ENCODE measurements at regions of chr7 and their contacts with region 1.

Region 1: DNA sequence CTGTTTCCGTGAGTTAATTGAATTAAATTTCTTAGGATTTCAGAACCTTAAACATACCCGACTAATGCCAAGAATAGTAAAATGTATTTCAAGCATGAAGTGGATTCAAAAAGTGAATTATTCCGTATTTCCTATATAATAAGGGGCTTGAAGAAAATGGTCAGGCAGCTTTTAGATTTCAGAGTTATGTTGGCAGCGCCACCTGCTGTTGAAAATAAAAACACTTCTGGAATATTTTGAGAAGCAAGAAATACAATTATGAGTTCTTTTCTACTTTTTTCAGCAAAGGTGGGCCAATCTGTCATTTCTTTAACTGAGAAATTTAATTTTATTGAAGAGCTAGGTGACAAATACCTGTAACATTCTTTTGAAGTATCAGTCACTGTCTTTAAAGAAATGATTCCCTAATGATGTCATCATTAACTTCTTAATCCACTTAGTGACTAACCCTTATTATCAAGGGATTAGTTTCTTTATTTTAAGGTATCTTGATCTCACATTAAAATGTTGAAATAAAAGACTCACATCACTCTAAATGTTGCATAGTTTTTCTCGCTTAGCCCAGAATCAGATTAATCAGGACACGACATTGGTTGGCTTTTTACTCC is 36.6 kb upstream of the AGR3 start:
- DNase-seq: no peak
- ATAC-seq: no peak
- H3K4me3 Mint-ChIP-seq: no peak overlapping the region
- H3K27ac Mint-ChIP-seq: no peak overlapping the region
- H3K4me1 Mint-ChIP-seq: peaks cover 32% of the 10 kb centered on the region
- H3K27me3 Mint-ChIP-seq: no peaks in the 10 kb centered on the region
- CTCF ChIP-seq: no peak

Region 2: DNA sequence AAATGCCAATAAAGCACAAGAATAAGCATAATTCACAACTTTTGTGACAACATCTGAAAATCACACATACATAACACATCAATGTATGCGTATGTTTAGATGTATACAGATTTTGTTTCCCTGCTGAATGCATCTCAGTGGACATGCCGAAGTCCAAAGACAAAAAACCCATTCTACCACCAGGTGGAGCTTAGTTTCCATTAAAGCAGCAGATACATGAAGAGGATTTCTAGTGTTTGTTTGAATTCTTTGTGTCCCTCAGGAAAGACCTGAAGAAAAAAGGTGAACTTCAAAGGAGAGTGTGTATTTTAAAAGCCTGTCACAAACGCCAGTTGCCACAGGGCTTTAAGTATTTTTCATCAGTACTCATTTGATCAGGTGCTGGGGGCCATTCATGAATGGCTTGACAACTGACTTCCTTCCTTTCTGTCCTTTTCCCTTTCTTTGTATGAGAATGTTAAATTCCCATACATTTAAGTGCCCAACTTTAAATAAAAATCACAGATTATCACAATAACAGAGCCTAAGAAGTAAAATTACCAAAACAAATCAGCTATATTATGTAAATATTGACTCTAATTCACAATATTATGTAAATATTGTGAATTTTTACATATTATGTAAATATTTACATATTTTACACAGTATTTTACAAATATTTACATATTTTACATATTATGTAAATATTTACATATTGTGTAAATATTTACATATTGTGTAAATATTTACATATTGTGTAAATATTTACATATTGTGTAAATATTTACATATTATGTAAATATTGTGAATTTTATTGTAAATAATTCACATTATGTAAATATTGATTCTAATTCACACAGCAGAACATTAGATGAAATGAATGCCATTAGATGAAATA is 840.1 kb before region 1 on chr7:
- CTCF ChIA-PET with region 1: interaction called, 4 read pairs
- POLR2A ChIA-PET with region 1: no interaction called
- intact Hi-C with region 1: loop called (anchors 2 kb)
- DNase-seq: no peak
- ATAC-seq: no peak
- H3K4me3 Mint-ChIP-seq: no peak overlapping the region
- H3K27ac Mint-ChIP-seq: no peak overlapping the region
- H3K4me1 Mint-ChIP-seq: no peaks in the 10 kb centered on the region
- H3K27me3 Mint-ChIP-seq: no peaks in the 10 kb centered on the region
- CTCF ChIP-seq: no peak

Region 3: DNA sequence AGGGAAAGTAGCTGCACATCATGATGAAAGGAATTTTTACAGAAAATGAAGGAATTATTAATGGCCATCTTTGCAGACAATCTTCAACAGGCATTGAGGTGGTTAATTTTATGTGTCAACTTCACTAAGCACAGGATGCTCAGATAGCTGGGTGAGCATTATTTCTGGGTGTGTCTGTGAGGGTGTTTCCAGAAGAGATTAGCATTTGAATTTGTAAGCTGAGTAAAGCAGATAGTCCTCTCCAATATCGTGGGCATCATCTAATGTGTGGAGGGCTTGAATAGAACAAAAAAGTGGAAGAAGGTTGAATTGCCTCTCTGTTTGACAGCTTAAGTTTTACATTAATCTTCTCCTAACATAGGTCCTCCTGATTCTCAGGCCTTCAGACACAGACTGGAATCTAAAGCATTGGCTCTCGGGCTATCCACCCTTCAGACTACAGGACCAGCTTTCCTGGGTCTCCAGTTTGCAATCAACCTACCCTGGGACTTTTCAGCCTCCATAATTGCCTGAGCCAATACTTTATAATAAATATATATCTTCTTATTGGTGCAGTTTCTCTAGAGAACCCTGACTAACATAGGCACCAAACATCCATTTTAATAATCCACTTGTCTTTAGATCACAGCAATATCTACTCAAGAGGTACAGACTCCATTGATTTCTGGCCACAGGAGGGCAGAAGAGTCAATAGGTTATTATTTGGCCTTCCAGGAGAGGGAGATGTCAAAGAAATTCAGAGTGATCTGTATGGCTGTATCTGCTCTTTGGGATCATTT is 486.6 kb before region 1 on chr7:
- CTCF ChIA-PET with region 1: interaction called, 7 read pairs
- POLR2A ChIA-PET with region 1: no interaction called
- intact Hi-C with region 1: loop called (anchors 1 kb)
- DNase-seq: no peak
- ATAC-seq: peak; percentile 56
- H3K4me3 Mint-ChIP-seq: no peak overlapping the region
- H3K27ac Mint-ChIP-seq: no peak overlapping the region
- H3K4me1 Mint-ChIP-seq: no peaks in the 10 kb centered on the region
- H3K27me3 Mint-ChIP-seq: peaks cover 4% of the 10 kb centered on the region
- CTCF ChIP-seq: no peak

Region 4: GRCh38 chr7:16604054-16604453 is 314.3 kb before region 1 on chr7:
- CTCF ChIA-PET with region 1: no interaction called
- POLR2A ChIA-PET with region 1: no interaction called
- intact Hi-C with region 1: loop called (anchors 1 kb)
- DNase-seq: no peak
- ATAC-seq: no peak
- H3K4me3 Mint-ChIP-seq: no peak overlapping the region
- H3K27ac Mint-ChIP-seq: no peak overlapping the region
- H3K4me1 Mint-ChIP-seq: peaks cover 3% of the 10 kb centered on the region
- H3K27me3 Mint-ChIP-seq: no peaks in the 10 kb centered on the region
- CTCF ChIP-seq: no peak

Region 5: DNA sequence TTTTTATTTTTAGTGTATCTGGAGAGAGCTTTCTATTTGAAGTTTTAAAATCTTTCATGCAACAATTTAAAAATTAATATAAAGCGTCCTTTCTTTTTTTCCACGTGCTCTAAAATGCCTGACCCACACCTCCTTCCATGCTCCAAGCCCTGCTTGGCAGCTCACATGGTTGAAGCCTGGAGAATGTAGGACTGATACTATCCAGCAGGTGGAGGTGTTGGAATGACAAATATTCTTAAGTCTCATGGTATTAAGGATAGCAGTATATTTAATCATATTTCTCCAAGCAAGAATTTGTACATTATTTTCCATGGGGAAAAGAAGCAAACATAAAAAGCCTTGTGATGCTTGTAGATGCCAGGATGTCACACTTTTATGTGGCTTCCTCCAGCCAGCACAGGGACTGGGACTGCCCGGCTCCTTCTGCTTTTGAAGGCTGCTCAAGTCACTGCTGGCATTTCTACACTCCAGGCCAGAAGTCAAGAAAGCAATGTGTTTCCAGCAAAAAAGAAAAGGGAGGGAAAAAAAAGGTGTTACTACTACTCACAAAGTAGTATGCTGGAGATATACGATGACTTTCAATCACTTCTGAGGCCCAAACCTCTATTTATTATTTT is 222.7 kb before region 1 on chr7:
- CTCF ChIA-PET with region 1: interaction called, 29 read pairs
- POLR2A ChIA-PET with region 1: no interaction called
- intact Hi-C with region 1: loop called (anchors 1 kb)
- DNase-seq: no peak
- ATAC-seq: peak; percentile 49
- H3K4me3 Mint-ChIP-seq: no peak overlapping the region
- H3K27ac Mint-ChIP-seq: no peak overlapping the region
- H3K4me1 Mint-ChIP-seq: no peaks in the 10 kb centered on the region
- H3K27me3 Mint-ChIP-seq: no peaks in the 10 kb centered on the region
- CTCF ChIP-seq: no peak

Region 6: DNA sequence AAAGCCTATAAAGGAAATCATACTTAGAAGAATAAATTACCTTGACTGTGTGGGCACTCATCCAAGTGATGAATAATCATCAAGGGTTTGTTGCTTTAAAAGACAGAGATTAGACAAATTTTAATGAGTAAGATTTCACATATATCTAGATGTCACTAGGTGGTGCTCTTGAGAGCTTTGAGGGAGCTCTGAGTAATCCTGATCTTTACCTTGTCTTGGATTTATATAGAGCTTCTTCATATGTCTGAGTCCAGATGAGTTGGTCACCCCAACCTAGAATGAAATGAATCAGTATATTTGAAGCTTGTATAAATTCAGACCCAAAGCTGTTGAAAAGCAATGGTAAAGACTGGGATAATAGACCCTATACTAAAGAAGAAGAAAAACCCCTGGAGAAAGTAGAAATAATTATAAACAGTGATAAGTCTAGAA is 117.3 kb before region 1 on chr7:
- CTCF ChIA-PET with region 1: interaction called, 54 read pairs
- POLR2A ChIA-PET with region 1: no interaction called
- intact Hi-C with region 1: loop called (anchors 1 kb)
- DNase-seq: no peak
- ATAC-seq: peak; percentile 56
- H3K4me3 Mint-ChIP-seq: no peak overlapping the region
- H3K27ac Mint-ChIP-seq: no peak overlapping the region
- H3K4me1 Mint-ChIP-seq: peaks cover 4% of the 10 kb centered on the region
- H3K27me3 Mint-ChIP-seq: no peaks in the 10 kb centered on the region
- CTCF ChIP-seq: no peak

Region 7: GRCh38 chr7:16891338-16891737 is 27.1 kb before region 1 on chr7:
- CTCF ChIA-PET with region 1: interaction called, 21 read pairs
- POLR2A ChIA-PET with region 1: no interaction called
- intact Hi-C with region 1: loop called (anchors 1 kb)
- DNase-seq: no peak
- ATAC-seq: peak; percentile 45
- H3K4me3 Mint-ChIP-seq: no peak overlapping the region
- H3K27ac Mint-ChIP-seq: no peak overlapping the region
- H3K4me1 Mint-ChIP-seq: peaks cover 4% of the 10 kb centered on the region
- H3K27me3 Mint-ChIP-seq: no peaks in the 10 kb centered on the region
- CTCF ChIP-seq: no peak

Region 8: DNA sequence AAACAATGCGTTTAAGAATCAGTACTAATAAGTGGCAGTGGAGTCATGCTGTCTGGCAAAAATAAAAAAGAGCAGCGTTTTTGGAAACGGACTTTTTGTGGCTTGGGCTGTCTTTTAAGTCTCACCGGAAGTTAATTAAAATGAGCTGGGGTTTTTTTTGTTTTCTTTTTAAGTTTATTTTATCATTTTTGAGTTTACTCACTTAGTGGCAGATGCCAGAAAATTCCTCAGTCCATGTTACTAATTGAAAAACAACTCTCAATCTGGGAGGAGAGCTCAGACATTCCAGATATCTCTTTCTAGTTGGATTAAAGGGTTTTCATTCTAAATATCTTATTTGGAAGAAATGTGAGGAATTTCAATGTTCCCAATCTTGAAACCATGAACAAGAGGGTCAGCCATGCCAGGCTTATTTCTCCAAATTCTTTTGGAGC is 97.2 kb after region 1 on chr7:
- CTCF ChIA-PET with region 1: no interaction called
- POLR2A ChIA-PET with region 1: no interaction called
- intact Hi-C with region 1: no loop called
- DNase-seq: no peak
- ATAC-seq: no peak
- H3K4me3 Mint-ChIP-seq: no peak overlapping the region
- H3K27ac Mint-ChIP-seq: no peak overlapping the region
- H3K4me1 Mint-ChIP-seq: peaks cover 4% of the 10 kb centered on the region
- H3K27me3 Mint-ChIP-seq: no peaks in the 10 kb centered on the region
- CTCF ChIP-seq: no peak

Region 9: GRCh38 chr7:17085186-17085585 is 166.8 kb after region 1 on chr7:
- CTCF ChIA-PET with region 1: no interaction called
- POLR2A ChIA-PET with region 1: no interaction called
- intact Hi-C with region 1: no loop called
- DNase-seq: no peak
- ATAC-seq: no peak
- H3K4me3 Mint-ChIP-seq: no peak overlapping the region
- H3K27ac Mint-ChIP-seq: no peak overlapping the region
- H3K4me1 Mint-ChIP-seq: no peaks in the 10 kb centered on the region
- H3K27me3 Mint-ChIP-seq: no peaks in the 10 kb centered on the region
- CTCF ChIP-seq: no peak

Region 10: DNA sequence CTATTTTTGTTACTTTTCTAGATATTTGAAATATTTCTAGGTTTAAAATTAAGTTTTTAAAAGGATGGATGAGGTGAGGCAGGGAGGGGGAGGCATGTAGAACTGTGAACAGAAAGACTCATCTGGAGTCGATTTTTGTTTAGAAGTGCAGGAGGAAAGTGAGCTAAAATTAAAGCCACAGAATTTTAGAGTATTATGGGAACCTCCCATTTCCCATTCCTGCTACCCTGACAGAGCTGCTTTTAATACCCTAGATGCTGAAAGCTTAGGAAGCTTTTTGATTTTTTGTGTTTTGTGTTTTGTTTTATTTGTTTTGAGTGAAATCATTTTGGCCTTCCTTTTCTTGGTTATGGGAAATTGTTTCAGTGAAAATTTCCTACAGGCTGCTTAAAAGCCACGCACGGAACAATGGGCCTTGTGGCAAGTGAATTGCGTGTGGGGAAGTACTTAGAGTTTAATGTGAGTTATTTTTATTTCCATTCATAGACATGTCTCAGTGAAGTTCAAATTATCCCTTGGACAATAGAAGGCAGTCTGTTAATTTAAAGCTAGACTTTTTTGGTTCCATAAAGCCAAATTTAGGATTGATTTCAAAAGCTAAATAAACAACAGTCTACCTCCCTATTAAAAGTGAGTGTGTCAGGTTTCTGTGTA is 1475.2 kb after region 1 on chr7:
- CTCF ChIA-PET with region 1: no interaction called
- POLR2A ChIA-PET with region 1: no interaction called
- intact Hi-C with region 1: no loop called
- DNase-seq: no peak
- ATAC-seq: no peak
- H3K4me3 Mint-ChIP-seq: no peak overlapping the region
- H3K27ac Mint-ChIP-seq: peak overlapping the region; percentile 14
- H3K4me1 Mint-ChIP-seq: peaks cover 49% of the 10 kb centered on the region
- H3K27me3 Mint-ChIP-seq: no peaks in the 10 kb centered on the region
- CTCF ChIP-seq: no peak